T-cell (primary cell): ENCODE measurements at regions of chr11 and their contacts with region 1.

Region 1: DNA sequence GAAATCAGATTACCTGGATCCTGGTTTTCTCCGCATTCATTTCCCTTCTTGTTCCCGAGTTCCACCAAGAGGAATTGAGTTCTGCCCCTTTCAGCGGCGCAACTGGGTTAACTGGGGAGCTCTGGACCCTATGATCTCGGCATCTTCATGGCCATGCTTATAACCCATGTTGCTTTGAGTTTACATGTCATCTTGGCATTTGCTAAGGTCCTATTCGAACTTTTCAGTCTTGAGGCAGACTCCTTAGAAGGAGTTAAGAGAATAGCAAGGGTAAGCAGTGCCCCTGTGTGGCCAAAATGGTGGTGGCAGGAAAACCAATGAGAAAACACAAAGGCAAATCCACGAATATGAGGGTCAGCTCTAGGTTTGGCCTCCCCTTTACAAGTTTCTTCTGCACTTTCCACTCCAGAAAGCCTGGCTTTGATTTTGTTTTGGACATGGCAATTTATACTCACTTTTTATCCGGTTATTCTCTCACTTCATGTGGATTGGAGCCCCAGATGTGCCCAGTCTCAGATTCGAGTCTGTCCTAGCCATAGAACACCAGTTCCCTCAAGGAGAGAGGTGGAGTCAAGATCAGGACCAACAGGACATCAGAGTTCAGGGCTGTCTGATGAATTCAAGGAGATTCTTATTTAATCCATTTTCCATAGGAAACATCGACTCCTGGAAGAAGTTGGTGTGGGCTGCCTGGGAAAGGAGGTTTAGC is 55.3 kb upstream of the FBXO3 start:
- DNase-seq: peak; percentile 11 to 76 (median 46)
- ATAC-seq: peak; percentile 79 to 89 (median 86)
- H3K4me3 ChIP-seq: peak overlapping the region; percentile 11 to 57
- H3K4me3 Mint-ChIP-seq: peak overlapping the region; percentile 71 to 74 (median 73)
- H3K27ac ChIP-seq: no peak overlapping the region
- H3K27ac Mint-ChIP-seq: peak overlapping the region in 1 of 2 donors; percentile 29
- H3K4me1 ChIP-seq: peaks cover 3 to 10% of the 10 kb centered on the region in 2 experiments
- H3K4me1 Mint-ChIP-seq: peaks cover 5 to 9% (median 6%) of the 10 kb centered on the region in 3 donors
- H3K27me3 ChIP-seq: peaks cover 9 to 36% of the 10 kb centered on the region in 2 experiments
- H3K27me3 Mint-ChIP-seq: peaks cover 53 to 54% of the 10 kb centered on the region in 2 donors

Region 2: GRCh38 chr11:33402066-33402465 is 427.5 kb before region 1 on chr11:
- CTCF ChIA-PET with region 1: no interaction called
- POLR2A ChIA-PET with region 1: no interaction called
- DNase-seq: no peak
- ATAC-seq: no peak
- H3K4me3 ChIP-seq: no peak overlapping the region
- H3K4me3 Mint-ChIP-seq: no peak overlapping the region
- H3K27ac ChIP-seq: no peak overlapping the region
- H3K27ac Mint-ChIP-seq: no peak overlapping the region
- H3K4me1 ChIP-seq: no peaks in the 10 kb centered on the region
- H3K4me1 Mint-ChIP-seq: no peaks in the 10 kb centered on the region
- H3K27me3 ChIP-seq: peaks cover 0 to 15% of the 10 kb centered on the region in 2 experiments
- H3K27me3 Mint-ChIP-seq: peaks cover 2 to 12% of the 10 kb centered on the region in 2 donors

Region 3: GRCh38 chr11:33808228-33808828 is 21.3 kb before region 1 on chr11:
- CTCF ChIA-PET with region 1: interaction called, 9 to 34 read pairs
- POLR2A ChIA-PET with region 1: no interaction called
- DNase-seq: peak; percentile 39 to 88 (median 76)
- ATAC-seq: peak; percentile 75 to 90 (median 87)
- H3K4me3 ChIP-seq: no peak overlapping the region
- H3K4me3 Mint-ChIP-seq: no peak overlapping the region
- H3K27ac ChIP-seq: no peak overlapping the region
- H3K27ac Mint-ChIP-seq: no peak overlapping the region
- H3K4me1 ChIP-seq: peaks cover 0 to 3% of the 10 kb centered on the region in 2 experiments
- H3K4me1 Mint-ChIP-seq: peaks cover 0 to 5% (median 0%) of the 10 kb centered on the region in 3 donors
- H3K27me3 ChIP-seq: peaks cover 0 to 11% of the 10 kb centered on the region in 2 experiments
- H3K27me3 Mint-ChIP-seq: peaks cover 11 to 15% of the 10 kb centered on the region in 2 donors

Region 4: DNA sequence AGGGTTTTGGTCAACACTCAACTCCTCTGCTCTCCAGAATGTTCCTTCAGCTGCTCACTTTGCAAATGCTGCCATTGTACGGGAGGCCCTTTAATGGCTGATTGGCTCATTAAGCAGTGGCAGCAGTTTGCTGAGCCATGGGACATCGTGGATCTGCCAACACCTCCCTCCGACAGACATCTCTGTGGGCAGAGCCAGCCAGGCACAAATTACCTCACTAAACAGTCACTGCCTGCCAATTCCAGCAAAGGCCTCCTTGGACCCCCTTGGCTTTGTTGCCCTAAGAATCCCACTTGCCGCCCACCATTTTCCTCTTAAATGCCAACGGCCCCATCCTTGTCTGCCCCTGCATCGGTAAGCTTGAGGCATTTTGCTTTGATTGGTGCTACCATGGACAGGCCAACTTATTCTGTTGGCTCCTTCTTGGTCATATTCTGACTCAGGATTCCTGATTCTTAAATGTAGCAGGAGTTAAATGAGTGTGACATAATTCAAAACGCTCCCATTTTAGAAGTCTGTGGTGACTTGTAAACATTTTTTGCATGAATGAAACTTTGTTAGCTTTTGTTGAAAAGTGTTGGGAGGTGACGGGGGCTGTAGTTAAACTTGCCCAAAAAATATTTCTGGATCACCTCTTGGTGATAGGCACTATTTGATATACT is 119.8 kb after region 1 on chr11:
- CTCF ChIA-PET with region 1: no interaction called
- POLR2A ChIA-PET with region 1: no interaction called
- DNase-seq: no peak
- ATAC-seq: no peak
- H3K4me3 ChIP-seq: no peak overlapping the region
- H3K4me3 Mint-ChIP-seq: no peak overlapping the region
- H3K27ac ChIP-seq: no peak overlapping the region
- H3K27ac Mint-ChIP-seq: no peak overlapping the region
- H3K4me1 ChIP-seq: no peaks in the 10 kb centered on the region
- H3K4me1 Mint-ChIP-seq: no peaks in the 10 kb centered on the region
- H3K27me3 ChIP-seq: peaks cover 0 to 13% of the 10 kb centered on the region in 2 experiments
- H3K27me3 Mint-ChIP-seq: peaks cover 7 to 15% of the 10 kb centered on the region in 2 donors